Adrenal gland (tissue), 19 donors: ENCODE measurements at regions of chr4 and their contacts with region 1.

Region 1: DNA sequence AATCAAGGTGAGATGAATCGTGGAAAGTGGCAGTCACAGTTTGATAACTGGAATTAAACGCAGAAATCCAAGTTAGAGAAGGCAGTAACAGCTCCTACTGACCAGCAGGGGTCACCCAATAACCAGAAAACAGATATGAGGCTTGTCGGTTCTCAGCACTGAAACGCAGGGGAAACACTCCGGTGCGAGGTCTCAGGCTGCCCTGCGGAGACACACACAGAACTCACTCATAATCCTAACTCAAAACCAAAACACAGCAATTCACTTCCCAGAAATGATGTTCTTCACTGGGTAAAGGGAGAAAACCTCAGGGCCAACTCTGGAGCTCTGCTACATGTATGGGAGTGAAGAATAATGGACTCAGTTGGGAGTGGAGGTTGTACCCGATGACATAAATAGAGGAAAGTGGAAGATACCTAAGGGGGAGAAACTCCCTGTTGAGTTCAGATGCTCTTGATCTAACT is 384.4 kb downstream of the RAPGEF2 start:
- DNase-seq: peak; percentile 55 to 77 (median 57)
- H3K4me3 ChIP-seq: no peak overlapping the region
- H3K27ac ChIP-seq: no peak overlapping the region
- H3K4me1 ChIP-seq: peaks cover 0 to 5% of the 10 kb centered on the region in 2 donors
- H3K27me3 ChIP-seq: no peaks in the 10 kb centered on the region
- CTCF ChIP-seq: peak; percentile 70 to 89 (median 82)
- POLR2A ChIP-seq: no peak

Region 2: DNA sequence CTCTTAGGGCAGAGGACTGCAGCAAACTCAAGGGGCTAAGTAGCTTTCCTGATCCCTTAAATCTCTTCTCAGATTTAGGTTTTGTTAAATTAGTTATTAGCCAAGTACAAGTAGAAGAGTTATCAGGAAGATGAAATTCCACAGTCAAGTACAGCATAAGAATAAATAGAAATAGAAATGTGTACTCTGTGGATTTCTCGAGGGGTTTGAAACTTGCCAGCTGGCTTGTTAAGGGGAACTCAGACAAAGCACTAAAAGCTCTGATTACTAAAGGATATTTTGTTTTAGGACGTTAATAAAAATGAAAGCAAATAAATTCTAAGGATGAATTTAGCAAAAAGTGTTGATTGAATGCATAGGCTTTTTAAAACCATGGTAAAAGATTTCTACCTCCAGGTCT is 270.2 kb after region 1 on chr4:
- intact Hi-C with region 1: loop called in 1 of 2 experiments (anchors 10 kb)
- DNase-seq: no peak
- H3K4me3 ChIP-seq: no peak overlapping the region
- H3K27ac ChIP-seq: no peak overlapping the region
- H3K4me1 ChIP-seq: no peaks in the 10 kb centered on the region
- H3K27me3 ChIP-seq: no peaks in the 10 kb centered on the region
- CTCF ChIP-seq: no peak
- POLR2A ChIP-seq: no peak